IMR-90 (cell line): ENCODE measurements at regions of chr21 and their contacts with region 1.

Region 1: DNA sequence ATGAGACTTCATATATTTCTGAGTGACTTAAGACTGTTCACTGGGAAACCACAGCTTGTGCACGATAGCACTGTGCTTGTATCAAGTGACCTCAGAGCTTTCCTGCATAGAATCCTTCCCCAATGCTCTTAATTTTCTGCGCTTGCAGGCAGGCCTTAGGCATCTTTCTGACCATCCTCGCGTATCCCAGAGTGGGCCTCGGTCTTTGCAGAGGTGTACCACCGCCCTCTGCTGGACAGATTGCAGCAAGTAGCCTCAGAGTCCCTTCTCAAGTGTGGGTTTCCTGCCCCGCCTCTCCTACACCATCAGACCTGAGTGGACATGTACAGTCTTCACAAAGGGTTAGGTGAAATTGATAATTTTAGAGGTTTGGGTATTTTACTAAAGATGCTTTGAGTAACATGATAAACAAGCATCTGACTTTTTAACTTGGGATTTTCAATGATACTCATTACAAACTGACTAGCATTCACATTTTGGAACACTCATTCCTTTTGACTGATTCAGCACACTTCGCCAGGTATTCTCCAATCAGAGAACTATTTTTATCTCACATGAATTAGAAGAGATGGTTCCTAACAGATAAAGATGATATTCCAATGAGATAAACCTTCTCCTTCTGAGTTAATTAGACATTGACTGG is 246.5 kb upstream of the USP25 start:
- DNase-seq: peak; percentile 82
- ATAC-seq: peak; percentile 100
- H3K4me3 ChIP-seq: no peak overlapping the region
- H3K27ac ChIP-seq: no peak overlapping the region
- H3K4me1 ChIP-seq: no peaks in the 10 kb centered on the region
- H3K27me3 ChIP-seq: no peaks in the 10 kb centered on the region
- CTCF ChIP-seq: peak; percentile 91
- POLR2A ChIP-seq: no peak
- RAD21 ChIP-seq: peak; percentile 96

Region 2: GRCh38 chr21:14306151-14306907 is 1176.9 kb before region 1 on chr21:
- CTCF ChIA-PET with region 1: no interaction called
- POLR2A ChIA-PET with region 1: no interaction called
- dilution Hi-C with region 1: no loop called
- in situ Hi-C with region 1: no loop called
- intact Hi-C with region 1: loop called (anchors 1 kb)
- DNase-seq: peak; percentile 3
- ATAC-seq: peak; percentile 24; the same call in 1 of the 2 replicates
- H3K4me3 ChIP-seq: no peak overlapping the region
- H3K27ac ChIP-seq: no peak overlapping the region
- H3K4me1 ChIP-seq: no peaks in the 10 kb centered on the region
- H3K27me3 ChIP-seq: no peaks in the 10 kb centered on the region
- CTCF ChIP-seq: peak; percentile 23
- POLR2A ChIP-seq: no peak
- RAD21 ChIP-seq: peak; percentile 34; the same call in 1 of the 2 replicates

Region 3: DNA sequence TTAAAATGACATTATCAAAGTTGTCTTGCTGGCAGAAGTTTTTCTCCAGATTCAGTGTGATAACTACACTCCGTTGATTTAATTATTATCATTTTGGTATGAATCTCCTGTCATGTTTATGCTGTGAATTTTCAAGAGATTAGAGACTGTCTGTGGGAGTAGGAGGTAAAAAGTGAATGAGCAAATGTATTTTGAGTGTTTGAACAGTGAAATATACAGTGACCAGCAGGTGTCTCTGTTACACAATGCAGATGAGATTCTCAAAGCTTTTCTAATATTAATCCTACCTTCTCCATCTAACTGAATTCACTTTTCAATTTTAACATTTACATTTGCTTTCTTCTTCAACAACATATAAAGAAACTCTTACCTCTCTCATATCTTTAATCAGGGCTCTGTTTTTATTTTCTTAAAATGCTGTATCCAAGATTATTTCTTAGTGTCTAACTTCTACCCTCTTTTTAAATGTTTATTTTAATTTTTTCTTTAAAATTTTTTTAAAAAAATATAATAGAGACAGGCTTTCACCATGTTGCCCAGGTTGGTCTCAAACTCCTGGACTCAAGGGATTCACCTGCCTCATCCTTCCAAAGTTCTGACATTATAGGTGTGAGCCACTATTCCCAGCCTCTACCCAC is 1079.5 kb before region 1 on chr21:
- CTCF ChIA-PET with region 1: interaction called, 4 read pairs
- POLR2A ChIA-PET with region 1: no interaction called
- dilution Hi-C with region 1: no loop called
- in situ Hi-C with region 1: no loop called
- intact Hi-C with region 1: loop called (anchors 1 kb)
- DNase-seq: peak; percentile 45
- ATAC-seq: peak; percentile 69
- H3K4me3 ChIP-seq: no peak overlapping the region
- H3K27ac ChIP-seq: no peak overlapping the region
- H3K4me1 ChIP-seq: no peaks in the 10 kb centered on the region
- H3K27me3 ChIP-seq: no peaks in the 10 kb centered on the region
- CTCF ChIP-seq: peak; percentile 66
- POLR2A ChIP-seq: no peak
- RAD21 ChIP-seq: peak; percentile 66

Region 4: GRCh38 chr21:14864211-14865021 is 618.8 kb before region 1 on chr21:
- CTCF ChIA-PET with region 1: interaction called, 9 read pairs
- POLR2A ChIA-PET with region 1: no interaction called
- dilution Hi-C with region 1: no loop called
- in situ Hi-C with region 1: loop called (anchors 25 kb)
- intact Hi-C with region 1: loop called (anchors 1 kb)
- DNase-seq: peak; percentile 86
- ATAC-seq: peak; percentile 83
- H3K4me3 ChIP-seq: no peak overlapping the region
- H3K27ac ChIP-seq: no peak overlapping the region
- H3K4me1 ChIP-seq: peaks cover 17% of the 10 kb centered on the region
- H3K27me3 ChIP-seq: no peaks in the 10 kb centered on the region
- CTCF ChIP-seq: peak; percentile 74
- POLR2A ChIP-seq: no peak
- RAD21 ChIP-seq: peak; percentile 85

Region 5: GRCh38 chr21:15568516-15568915 is 85.3 kb after region 1 on chr21:
- CTCF ChIA-PET with region 1: no interaction called
- POLR2A ChIA-PET with region 1: no interaction called
- dilution Hi-C with region 1: no loop called
- in situ Hi-C with region 1: no loop called
- intact Hi-C with region 1: no loop called
- DNase-seq: no peak
- ATAC-seq: no peak
- H3K4me3 ChIP-seq: no peak overlapping the region
- H3K27ac ChIP-seq: no peak overlapping the region
- H3K4me1 ChIP-seq: no peaks in the 10 kb centered on the region
- H3K27me3 ChIP-seq: no peaks in the 10 kb centered on the region; the same call in 1 of the 2 replicates
- CTCF ChIP-seq: no peak
- POLR2A ChIP-seq: no peak
- RAD21 ChIP-seq: no peak

Region 6: DNA sequence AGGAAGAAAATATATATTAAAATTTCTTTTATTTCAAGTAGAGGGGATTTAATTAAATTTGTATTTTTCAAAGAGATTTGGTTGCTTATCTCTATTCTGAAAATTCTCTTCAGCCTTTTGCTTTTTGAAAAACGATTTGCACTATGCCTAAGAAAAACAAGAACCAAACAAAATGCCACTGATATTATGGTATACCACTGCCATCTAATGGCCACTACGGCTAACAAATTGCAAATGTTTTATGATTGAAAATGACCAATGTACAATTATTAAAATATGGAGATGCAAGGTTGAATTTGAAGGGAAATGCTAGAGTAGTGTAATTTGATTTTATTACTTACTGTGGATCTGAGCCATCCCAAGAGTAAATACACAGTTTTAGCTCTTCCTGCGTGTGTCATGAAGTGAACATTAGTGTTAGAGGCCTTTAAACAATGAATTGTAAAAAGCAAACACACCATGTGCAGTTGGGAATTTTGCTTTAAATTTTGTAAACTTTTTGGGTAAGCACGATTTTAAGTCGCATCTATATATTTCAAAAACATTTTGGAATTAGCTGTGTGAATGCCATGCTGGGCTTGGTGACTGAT is 109.1 kb after region 1 on chr21:
- CTCF ChIA-PET with region 1: no interaction called
- POLR2A ChIA-PET with region 1: no interaction called
- dilution Hi-C with region 1: no loop called
- in situ Hi-C with region 1: no loop called
- intact Hi-C with region 1: loop called (anchors 2 kb)
- DNase-seq: peak; percentile 45
- ATAC-seq: peak; percentile 62
- H3K4me3 ChIP-seq: no peak overlapping the region
- H3K27ac ChIP-seq: no peak overlapping the region
- H3K4me1 ChIP-seq: no peaks in the 10 kb centered on the region
- H3K27me3 ChIP-seq: peaks cover 2% of the 10 kb centered on the region
- CTCF ChIP-seq: peak; percentile 69
- POLR2A ChIP-seq: no peak
- RAD21 ChIP-seq: peak; percentile 74